ENCODE measurements at regions of chrX and their contacts with region 1.

Region 1: DNA sequence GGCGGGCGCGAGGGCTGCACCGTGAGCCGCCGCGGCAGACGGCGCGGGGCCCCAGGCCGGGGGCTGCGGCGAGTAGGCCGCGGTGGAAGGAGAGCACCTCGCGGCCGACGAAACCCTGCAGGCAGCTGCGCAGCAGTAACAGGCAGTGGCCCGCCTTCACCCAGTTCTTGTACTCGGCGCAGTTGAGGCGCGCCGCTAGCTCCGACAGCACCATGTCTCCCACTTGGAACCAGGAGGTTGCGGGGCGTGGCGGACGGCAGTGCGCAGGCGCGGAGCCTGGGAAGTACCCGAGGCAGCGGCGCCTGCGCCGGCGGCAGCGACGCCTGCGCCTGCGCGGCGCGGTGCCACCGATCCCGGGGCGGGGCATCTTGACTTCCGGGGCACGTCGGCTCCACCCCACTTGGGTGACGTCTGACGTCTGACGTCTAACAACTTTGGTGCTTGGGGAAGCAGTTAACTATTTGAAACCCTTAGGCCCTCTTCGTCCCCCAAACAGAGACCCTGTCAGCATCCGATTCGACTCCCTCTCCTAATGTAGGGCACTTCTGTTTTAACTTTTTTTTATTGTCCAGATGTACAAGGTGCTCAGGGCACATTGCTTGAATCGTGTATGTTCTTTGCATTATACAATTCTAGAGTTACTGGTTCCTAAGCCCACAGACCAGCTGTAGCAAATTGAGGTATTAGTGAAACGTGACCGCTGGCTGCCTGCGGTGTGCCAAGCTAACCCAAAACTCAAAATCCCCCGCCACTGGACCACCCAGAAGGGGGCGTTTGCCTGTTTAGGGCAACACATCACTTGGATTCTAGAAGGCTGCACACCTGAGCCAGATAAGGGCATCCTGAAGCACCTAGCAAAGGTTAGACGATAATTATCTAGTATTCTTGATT is at the start of gene CXorf38:
- DNase-seq: peak; percentile 83
- ATAC-seq: peak; percentile 74
- H3K4me3 ChIP-seq: peak within 1 kb of the TSS; percentile 92
- H3K27ac ChIP-seq: peak within 1 kb of the TSS; percentile 74
- H3K4me1 ChIP-seq: no peaks in the 10 kb centered on the region
- H3K27me3 ChIP-seq: no peaks in the 10 kb centered on the region
- CTCF ChIP-seq: no peak
- POLR2A ChIP-seq: 0 out of 2 replicates have a peak, but pooled peaks have one; percentile 22
- RAD21 ChIP-seq: no peak
- total RNA-seq, gene CXorf38: 9.9 and 10.0 TPM in 2 replicates

Region 2: DNA sequence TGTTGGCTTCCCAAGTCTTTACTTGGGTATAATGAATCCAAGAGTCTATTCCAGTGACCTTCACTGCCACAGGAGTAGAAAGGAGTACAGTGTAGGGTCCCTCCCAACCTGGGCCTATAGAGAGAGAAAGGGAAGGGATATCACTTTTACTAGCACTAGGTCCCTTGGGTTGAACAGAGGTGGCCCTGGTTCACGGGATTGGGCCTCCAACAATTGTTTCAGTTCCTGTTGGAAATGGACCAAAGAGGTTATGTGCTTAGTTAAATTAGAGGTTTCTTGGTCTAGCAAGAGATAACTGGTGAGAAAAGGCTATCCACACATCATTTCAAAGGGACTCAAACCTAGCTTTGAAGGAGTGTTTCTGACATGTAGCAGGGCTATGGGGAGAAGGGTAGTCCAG is 144.9 kb after region 1 on chrX:
- CTCF ChIA-PET with region 1: interaction called, 4 read pairs
- POLR2A ChIA-PET with region 1: no interaction called
- dilution Hi-C with region 1: no loop called
- in situ Hi-C with region 1: loop called (anchors 10 kb)
- intact Hi-C with region 1: loop called (anchors 1 kb)
- DNase-seq: no peak
- ATAC-seq: no peak
- H3K4me3 ChIP-seq: no peak overlapping the region
- H3K27ac ChIP-seq: no peak overlapping the region
- H3K4me1 ChIP-seq: peaks cover 5% of the 10 kb centered on the region
- H3K27me3 ChIP-seq: no peaks in the 10 kb centered on the region; the same call in 1 of the 2 replicates
- CTCF ChIP-seq: no peak
- POLR2A ChIP-seq: no peak
- RAD21 ChIP-seq: no peak

Region 3: DNA sequence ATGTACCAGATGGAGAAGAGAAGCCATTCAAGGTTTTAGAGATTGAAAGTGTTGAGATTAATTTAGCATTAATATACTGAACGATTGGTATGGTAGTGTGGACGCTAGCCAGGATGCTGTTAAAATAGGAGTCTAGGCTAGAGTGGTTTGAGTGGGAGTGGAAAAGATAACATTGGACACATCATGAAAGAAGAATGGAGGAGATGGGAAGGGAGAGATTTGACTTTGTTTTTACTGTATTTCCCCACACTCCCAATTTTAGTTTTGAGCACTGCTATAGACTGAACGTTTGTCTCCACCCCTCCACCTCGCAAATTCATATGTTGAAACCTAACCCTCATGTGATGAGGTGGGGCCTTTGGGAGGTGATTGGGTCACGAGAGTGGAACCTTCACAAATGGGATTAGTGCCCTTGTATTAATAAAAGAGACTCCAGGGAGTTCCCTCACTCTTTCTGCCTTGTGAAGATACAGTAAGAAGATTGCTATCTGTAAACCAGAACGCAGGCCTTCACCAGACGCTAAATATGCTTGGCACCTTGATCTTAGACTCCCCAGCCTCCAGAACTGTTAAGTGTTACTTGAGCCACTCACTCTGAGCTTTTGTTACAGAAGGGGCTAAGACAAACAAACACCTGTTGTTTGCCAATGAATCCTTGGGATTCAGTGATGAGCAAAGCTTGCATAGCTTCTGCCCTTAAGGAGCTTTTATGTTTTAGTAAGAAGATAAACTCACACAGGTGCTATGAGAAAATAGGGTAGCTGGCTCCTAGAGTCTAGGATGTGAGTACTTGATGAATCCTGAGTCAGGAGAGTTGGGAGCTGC is 463.5 kb after region 1 on chrX:
- CTCF ChIA-PET with region 1: interaction called, 4 read pairs
- POLR2A ChIA-PET with region 1: no interaction called
- dilution Hi-C with region 1: no loop called
- in situ Hi-C with region 1: loop called (anchors 5 kb)
- intact Hi-C with region 1: loop called (anchors 1 kb)
- DNase-seq: peak; percentile 43
- ATAC-seq: peak; percentile 29; the same call in 1 of the 2 replicates
- H3K4me3 ChIP-seq: no peak overlapping the region
- H3K27ac ChIP-seq: no peak overlapping the region
- H3K4me1 ChIP-seq: peaks cover 4% of the 10 kb centered on the region; the same call in 1 of the 2 replicates
- H3K27me3 ChIP-seq: peaks cover 3% of the 10 kb centered on the region; the same call in 1 of the 2 replicates
- CTCF ChIP-seq: no peak
- POLR2A ChIP-seq: no peak
- RAD21 ChIP-seq: no peak

Region 4: DNA sequence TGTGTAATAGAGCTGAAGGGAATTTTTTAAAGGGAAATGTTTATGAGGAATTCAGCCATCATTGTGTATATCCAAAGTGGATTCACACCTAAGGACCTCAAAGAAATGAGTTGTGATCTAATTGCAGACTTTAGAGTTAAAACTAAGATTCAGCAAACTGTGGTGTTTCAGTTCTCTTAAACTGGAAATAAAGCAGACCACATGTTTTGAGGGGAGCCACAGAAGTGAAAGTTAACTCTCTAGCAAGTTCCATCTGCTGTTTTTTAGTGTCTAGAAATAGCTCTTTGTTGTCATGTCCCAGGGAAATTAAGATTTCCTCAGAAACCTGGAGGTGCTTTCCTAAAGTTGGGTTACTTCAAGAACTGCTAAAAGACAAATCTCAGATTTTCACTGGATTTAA is 589.1 kb after region 1 on chrX:
- CTCF ChIA-PET with region 1: no interaction called
- POLR2A ChIA-PET with region 1: no interaction called
- dilution Hi-C with region 1: no loop called
- in situ Hi-C with region 1: loop called (anchors 25 kb)
- intact Hi-C with region 1: no loop called
- DNase-seq: no peak
- ATAC-seq: no peak
- H3K4me3 ChIP-seq: no peak overlapping the region
- H3K27ac ChIP-seq: no peak overlapping the region
- H3K4me1 ChIP-seq: no peaks in the 10 kb centered on the region
- H3K27me3 ChIP-seq: no peaks in the 10 kb centered on the region
- CTCF ChIP-seq: no peak
- POLR2A ChIP-seq: no peak
- RAD21 ChIP-seq: no peak